Calu3 (cell line): ENCODE measurements at regions of chr1 and their contacts with region 1.

Region 1: DNA sequence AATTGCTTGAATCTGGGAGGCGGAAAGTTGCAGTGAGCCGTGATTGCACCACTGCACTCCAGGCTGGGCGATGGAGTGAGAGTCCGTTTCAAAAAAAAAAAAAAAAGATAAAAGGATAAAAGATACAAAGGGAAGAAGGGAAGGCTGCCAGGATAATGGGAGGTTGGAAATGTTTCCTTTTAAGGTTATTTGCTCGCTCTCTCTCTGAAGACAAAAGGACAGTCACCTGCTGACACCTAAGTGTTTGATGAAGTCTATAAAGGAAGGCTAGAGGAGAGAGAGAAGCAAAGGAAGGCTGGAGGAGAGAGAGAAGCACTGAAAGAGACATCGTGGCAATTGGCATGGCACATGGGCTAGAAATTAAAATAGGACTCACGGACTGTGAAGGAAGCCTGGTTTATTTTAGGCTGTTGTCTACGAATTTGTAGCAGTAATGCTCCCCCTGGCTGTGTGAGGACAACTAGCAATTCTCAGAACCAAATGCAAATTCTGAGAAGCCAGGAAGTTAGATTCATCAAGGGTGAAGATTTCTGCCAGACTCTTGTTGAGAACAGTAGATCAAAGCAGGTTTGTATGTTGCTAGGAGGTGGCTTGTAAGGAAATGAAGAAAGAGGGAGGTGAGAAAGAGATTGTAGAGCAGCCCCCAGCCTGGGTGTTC is 154.2 kb downstream of the ZP4 start:
- DNase-seq: peak; percentile 19
- H3K4me3 Mint-ChIP-seq: no peak overlapping the region
- H3K27ac Mint-ChIP-seq: peak overlapping the region; percentile 6
- H3K4me1 Mint-ChIP-seq: peaks cover 27% of the 10 kb centered on the region
- H3K27me3 Mint-ChIP-seq: no peaks in the 10 kb centered on the region
- CTCF ChIP-seq: no peak

Region 2: DNA sequence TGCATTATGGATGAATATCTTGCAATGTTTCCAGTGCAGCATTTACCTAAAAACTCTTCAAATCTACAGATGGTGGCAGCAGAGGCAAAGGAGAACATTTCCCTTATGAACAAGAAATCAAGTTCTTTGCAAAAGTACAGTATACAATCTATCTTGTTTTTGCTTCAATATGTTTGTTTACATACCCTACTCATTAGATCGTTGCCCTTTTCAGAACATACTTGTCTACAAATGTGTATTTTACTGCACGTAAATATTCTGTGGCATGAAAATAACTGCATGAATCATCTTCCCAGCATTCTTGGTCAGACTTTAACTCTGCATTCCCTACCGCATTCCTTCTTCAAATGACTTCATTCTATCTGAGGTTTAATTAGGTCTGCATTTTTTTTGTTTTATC is 58.5 kb before region 1 on chr1:
- CTCF ChIA-PET with region 1: no interaction called
- intact Hi-C with region 1: loop called (anchors 1 kb)
- DNase-seq: peak; percentile 8
- H3K4me3 Mint-ChIP-seq: no peak overlapping the region
- H3K27ac Mint-ChIP-seq: no peak overlapping the region
- H3K4me1 Mint-ChIP-seq: peaks cover 32% of the 10 kb centered on the region
- H3K27me3 Mint-ChIP-seq: no peaks in the 10 kb centered on the region
- CTCF ChIP-seq: no peak